RWPE1 (cell line): ENCODE measurements at regions of chr1 and their contacts with region 1.

Region 1: GRCh38 chr1:178532392-178532791 is 19.5 kb downstream of the TEX35 start:
- DNase-seq: peak; percentile 79
- H3K27ac ChIP-seq: no peak overlapping the region
- CTCF ChIP-seq: peak; percentile 89

Region 2: GRCh38 chr1:178300352-178300699 is 232.1 kb before region 1 on chr1:
- CTCF ChIA-PET with region 1: interaction called, 10 read pairs
- POLR2A ChIA-PET with region 1: no interaction called
- DNase-seq: no peak
- H3K27ac ChIP-seq: no peak overlapping the region
- CTCF ChIP-seq: no peak

Region 3: DNA sequence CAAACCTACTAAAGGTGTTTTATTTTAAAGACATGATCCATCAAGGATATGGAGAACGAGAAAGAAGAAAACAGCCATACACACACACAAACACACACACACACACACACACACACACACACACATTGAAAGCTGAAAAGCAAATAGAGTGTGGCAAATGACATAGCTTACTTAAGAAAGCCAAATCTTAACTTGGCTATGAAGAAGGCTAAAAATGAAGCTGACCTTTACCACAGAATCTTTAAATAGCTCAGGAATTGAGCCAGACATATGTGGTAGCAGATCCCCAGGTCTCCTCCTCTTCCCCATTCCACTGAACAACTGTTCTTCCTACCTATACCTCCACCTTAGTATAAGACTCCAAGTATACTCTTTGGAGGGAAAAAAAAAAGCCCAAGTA is 221.2 kb before region 1 on chr1:
- CTCF ChIA-PET with region 1: interaction called, 11 read pairs
- POLR2A ChIA-PET with region 1: no interaction called
- DNase-seq: no peak
- H3K27ac ChIP-seq: no peak overlapping the region
- CTCF ChIP-seq: no peak

Region 4: GRCh38 chr1:179002552-179003345 is 470.4 kb after region 1 on chr1:
- CTCF ChIA-PET with region 1: interaction called, 20 read pairs
- POLR2A ChIA-PET with region 1: interaction called, 3 read pairs
- DNase-seq: peak; percentile 38
- H3K27ac ChIP-seq: no peak overlapping the region
- CTCF ChIP-seq: peak; percentile 85